ENCODE measurements at regions of chr17 and their contacts with region 1.

Region 1: DNA sequence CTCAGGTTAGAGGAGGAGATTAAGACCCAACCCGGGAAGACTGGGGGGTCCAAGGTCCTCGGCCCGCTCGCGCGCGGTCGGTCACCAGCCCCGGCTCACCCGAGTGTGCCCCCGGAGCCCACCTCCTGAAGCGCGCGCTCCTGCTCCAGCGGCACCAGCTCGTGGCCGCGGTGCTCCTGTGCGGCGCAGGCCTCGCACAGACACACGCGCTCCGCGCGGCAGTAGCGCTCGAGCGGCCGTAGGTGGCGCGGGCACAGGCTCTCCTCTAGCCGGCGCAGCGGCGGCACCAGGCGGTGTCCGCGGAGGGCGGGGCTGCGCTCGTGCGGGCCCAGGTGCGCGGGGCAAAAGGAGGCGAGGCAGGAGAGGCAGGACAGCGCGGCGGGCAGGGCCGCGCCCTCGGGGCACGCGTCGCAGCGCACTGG is 618 bp downstream of the TRIM47 start:
- DNase-seq: no peak

Region 2: DNA sequence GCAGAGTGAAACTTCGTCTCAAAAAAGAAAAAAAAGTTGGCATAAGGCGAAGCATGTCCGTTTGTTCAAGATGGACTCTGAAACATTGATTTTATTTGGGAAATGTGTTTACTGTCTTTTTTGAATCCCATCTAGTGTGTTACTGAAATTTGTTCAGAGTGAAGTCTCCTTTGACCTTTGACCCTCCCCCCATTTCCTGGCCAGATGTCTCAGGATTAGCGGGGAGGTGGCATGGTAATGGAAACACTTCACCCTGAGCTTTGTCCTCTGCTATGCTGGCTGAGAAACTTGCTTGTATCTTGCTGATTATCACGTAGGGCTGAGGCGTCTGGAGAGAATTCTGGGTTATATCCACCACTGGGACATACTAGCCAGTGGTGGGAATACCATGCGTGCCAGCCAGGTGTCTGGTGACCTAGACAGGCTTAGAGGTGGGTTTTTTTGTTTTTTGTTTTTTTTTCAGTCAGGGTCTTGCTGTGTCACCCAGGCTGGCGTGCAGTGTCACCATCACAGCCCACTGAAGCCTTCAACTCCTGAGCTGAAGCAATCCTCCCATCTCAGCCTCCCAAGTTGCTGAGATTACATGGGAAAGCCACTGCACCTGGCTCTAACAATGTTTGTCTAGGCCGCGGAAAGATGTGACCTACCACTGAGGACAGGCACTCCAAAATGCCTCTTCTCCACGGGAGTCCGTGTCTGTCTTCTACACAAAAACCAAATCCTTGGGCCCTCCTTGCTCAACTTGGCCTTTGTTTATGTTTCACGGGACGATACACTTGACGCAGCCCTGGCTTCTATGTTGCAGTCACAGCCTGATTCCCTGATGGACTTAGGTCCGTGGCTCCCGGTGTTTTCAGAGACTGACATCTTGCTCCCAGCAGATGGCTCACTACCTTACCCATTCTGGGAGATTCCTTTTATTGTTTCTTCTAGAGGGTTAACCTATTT is 106.2 kb before region 1 on chr17:
- intact Hi-C with region 1: no loop called
- DNase-seq: no peak

Region 3: GRCh38 chr17:75784473-75785015 is 93.2 kb before region 1 on chr17 and contains the start of gene UNK:
- intact Hi-C with region 1: loop called (anchors 1 kb)
- DNase-seq: peak; percentile 99
- total RNA-seq, gene UNK: 16.8 TPM

Region 4: GRCh38 chr17:75808905-75809715 is 68.7 kb before region 1 on chr17:
- intact Hi-C with region 1: loop called (anchors 2 kb)
- DNase-seq: peak; percentile 85

Region 5: GRCh38 chr17:75855310-75856081 is 22.3 kb before region 1 on chr17 and contains the start of gene WBP2:
- intact Hi-C with region 1: loop called (anchors 1 kb)
- DNase-seq: peak; percentile 98
- total RNA-seq, gene WBP2: 129 TPM

Region 6: DNA sequence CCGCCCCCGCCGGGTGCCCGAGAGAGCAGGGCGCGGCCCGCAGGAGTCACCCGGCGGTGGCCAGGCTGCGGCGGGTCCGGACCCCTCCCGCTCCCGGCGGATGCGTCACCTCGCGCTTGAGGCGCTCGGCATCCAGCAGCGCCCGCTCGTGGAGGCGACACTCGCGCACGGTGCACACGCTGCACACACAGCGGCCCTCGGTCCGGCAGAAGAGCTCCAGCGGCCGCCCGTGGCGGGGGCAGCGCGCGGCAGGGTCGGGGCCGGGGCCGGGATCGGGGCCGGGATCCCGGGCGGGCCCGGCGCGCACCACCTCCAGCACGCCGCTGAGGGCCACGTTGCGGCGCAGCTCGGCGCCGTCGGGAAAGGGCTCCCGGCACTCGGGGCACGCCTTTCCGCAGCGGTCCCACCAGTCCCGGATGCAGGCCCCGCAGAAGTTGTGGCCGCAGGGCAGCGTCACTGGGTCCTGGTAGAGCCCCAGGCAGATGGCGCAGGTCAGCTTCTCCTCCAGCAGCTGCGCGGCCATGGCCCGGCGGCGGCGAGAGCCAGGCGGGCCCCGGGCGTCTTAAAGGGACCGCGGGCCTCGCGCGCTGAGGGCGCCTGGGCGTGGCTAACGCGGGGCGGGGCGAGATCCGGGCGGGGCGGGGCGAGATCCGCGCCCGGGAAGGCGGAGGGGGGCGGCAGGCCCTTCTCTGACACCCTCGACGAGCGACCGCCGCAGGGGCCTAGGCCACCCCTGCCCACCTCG is 18.8 kb after region 1 on chr17 and contains the start of gene TRIM65:
- intact Hi-C with region 1: loop called (anchors 1 kb)
- DNase-seq: peak; percentile 92
- total RNA-seq, gene TRIM65: 12.1 TPM

Measured in cardiac septum (tissue), 1 donor.